ENCODE measurements at regions of chrX and their contacts with region 1.

Region 1: DNA sequence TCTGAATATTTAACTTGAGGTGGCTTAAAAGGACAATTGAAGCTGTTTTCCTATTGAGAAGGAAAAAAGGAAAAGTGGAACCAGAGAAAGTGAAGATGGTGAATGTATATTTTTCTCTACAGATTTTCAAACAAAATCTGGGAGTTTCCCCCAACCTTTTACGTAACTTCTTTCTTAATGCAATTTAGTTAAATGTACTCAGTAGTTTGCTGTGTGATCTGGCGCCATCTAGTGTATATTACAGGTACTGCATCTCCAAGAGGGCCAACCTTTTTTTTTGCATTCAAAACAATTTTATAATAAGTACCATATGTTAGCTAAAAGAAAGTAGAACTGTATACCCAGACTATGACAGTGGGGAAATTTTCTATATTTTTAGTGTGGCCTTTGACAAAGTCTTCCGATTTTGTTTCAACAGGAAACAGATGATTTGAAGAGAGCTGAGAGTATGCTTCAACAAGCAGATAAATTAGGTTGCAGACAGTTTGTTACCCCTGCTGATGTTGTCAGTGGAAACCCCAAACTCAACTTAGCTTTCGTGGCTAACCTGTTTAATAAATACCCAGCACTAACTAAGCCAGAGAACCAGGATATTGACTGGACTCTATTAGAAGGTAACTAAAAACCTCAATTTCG is 82.0 kb downstream of the PLS3 start:
- DNase-seq: no peak
- H3K4me3 ChIP-seq: no peak overlapping the region
- H3K27ac ChIP-seq: peak overlapping the region; percentile 63
- H3K4me1 ChIP-seq: peaks cover 8% of the 10 kb centered on the region
- H3K27me3 ChIP-seq: no peaks in the 10 kb centered on the region
- CTCF ChIP-seq: peak; percentile 86

Region 2: GRCh38 chrX:115330498-115331168 is 312.4 kb before region 1 on chrX:
- intact Hi-C with region 1: loop called (anchors 10 kb)
- DNase-seq: no peak
- H3K4me3 ChIP-seq: peak overlapping the region; percentile 29
- H3K27ac ChIP-seq: no peak overlapping the region
- H3K4me1 ChIP-seq: no peaks in the 10 kb centered on the region
- H3K27me3 ChIP-seq: no peaks in the 10 kb centered on the region
- CTCF ChIP-seq: peak; percentile 79